ENCODE measurements at regions of chr17 and their contacts with region 1.

Region 1: GRCh38 chr17:64306850-64307463 is 43.9 kb upstream of the TEX2 start:
- DNase-seq: peak; percentile 83
- ATAC-seq: peak; percentile 74

Region 2: DNA sequence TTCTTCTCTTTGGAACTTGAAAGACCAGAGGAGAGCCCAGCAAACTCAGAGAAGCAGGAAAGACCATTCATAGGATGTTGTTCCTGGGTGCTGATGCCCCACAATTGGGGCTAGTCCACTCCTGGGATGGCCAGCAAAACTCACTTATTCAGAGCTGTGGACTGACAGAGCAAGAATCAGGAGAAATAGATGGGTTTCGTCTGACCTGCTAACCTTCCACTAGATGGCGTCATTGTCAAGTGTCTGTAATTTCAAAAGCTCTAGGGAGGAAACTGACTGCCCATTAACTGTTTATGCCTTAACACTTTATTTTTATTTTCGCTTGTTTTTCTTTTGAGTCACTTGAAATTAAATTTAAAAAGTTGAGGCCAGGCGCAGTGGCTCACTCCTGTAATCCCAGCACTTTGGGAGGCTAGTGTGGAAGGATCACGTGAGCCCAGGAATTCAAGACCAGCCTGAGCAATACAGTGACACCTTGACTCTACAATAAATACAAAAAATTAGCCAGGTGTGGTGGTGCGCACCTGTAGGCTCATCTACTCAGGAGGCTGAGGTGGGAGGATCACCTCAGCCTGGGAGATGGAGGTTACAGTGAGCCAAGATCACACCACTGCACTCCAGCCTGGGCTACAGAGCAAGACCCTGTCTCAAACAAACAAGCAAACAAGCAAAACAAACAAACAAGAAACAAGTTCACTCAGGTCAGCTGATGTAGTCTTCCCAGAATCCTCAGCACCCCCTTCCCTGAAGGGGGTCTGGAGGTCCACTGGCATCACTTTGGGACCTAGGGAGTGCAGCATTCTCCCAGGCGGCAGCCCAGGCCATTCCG is 113.4 kb after region 1 on chr17:
- intact Hi-C with region 1: loop called (anchors 1 kb)
- DNase-seq: peak; percentile 47
- ATAC-seq: peak; percentile 84

Region 3: GRCh38 chr17:64638552-64639203 is 331.7 kb after region 1 on chr17:
- intact Hi-C with region 1: no loop called
- DNase-seq: no peak
- ATAC-seq: no peak

Region 4: GRCh38 chr17:65219124-65219523 is 912.2 kb after region 1 on chr17:
- intact Hi-C with region 1: no loop called
- DNase-seq: no peak
- ATAC-seq: no peak